MCF 10A (cell line): ENCODE measurements at regions of chr17 and their contacts with region 1.

Region 1: GRCh38 chr17:8057691-8058114 is 18.8 kb downstream of the ALOX15B start:
- DNase-seq: peak; percentile 86
- H3K4me3 Mint-ChIP-seq: no peak overlapping the region
- H3K27ac Mint-ChIP-seq: no peak overlapping the region
- H3K4me1 Mint-ChIP-seq: peaks cover 34% of the 10 kb centered on the region
- H3K27me3 Mint-ChIP-seq: peaks cover 12% of the 10 kb centered on the region
- CTCF ChIP-seq: peak; percentile 86

Region 2: DNA sequence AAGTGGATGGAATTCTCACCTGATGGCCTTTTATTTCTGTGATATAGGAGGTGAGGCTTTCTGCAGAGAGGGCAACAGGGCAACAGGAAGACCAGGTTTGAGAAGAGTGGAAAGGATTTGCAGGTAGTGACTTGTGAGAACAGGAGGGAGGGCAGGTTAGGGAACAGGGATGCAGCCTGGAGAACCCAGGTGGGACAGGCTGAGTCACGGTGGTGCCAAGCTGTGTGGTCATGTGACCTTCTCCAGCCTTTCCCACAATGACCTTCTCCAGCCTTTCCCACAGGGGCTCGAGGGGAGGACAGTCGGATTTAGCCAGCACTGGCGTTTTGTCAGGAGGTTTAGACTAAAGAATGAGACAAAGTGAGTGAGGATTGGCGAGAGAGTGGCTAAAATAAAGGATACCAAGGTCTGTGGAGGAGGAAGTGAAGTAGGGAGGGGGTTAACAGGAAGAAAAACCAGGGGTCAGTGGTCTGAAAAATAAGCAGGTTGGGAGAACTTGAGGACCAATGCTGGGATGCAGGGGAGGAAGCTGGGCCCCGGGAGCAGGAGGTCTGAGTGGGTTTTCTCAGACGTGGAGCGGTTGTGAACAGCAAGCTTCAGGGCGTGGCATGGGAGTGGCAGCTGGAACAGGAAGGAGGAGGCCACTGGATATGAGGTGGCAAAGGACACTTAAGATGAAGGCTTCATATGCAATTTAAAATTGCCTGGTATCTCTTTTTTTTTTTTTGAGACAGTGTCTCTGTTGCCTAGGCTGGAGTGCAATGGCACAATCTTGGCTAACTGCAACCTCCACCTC is 302.4 kb before region 1 on chr17:
- CTCF ChIA-PET with region 1: no interaction called
- POLR2A ChIA-PET with region 1: no interaction called
- intact Hi-C with region 1: no loop called
- DNase-seq: no peak
- H3K4me3 Mint-ChIP-seq: no peak overlapping the region
- H3K27ac Mint-ChIP-seq: no peak overlapping the region
- H3K4me1 Mint-ChIP-seq: peaks cover 14% of the 10 kb centered on the region
- H3K27me3 Mint-ChIP-seq: no peaks in the 10 kb centered on the region
- CTCF ChIP-seq: no peak

Region 3: DNA sequence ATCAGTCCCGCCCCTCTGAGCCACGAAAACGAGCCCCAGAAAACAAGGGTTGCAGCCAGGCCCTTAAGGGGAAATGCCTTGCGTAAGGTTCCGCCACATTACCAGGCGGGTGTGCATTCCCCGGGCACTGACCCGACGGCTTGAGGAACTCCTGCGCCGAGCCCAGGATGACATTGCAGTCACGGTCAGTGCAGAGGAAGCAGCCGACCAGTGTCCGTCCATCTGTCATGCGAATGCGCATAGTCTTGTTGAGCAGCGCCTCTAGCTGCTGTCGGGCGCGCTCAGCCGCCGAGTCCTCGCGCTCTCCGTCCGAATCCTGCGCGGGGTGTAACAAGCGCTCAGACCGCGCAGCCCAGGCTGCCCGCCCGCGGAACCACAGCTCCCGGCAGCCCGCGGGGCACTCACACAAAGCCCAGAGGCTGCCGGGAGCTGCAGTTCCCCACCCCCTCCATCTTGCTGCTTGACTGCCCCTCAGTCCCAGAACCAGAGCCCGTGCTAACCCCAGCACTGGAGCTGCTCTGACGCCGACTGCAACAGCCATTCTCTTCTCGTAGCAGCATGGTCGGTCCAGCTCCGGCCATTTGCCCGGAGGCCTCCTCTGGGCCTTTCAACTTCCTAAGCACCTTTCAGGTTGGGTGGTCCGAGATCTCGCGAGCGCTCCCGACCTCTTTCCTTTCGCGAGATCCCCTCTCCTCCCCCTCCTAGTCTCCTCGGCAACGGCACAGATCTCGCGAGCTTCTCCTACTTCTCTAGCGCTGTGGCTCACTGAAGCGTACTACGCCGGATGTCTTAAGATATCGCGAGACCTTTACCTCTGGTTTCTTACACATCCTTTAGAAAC is 200.6 kb before region 1 on chr17 and contains the start of gene NAA38:
- CTCF ChIA-PET with region 1: interaction called, 17 read pairs
- POLR2A ChIA-PET with region 1: interaction called, 6 read pairs
- intact Hi-C with region 1: loop called (anchors 5 kb)
- DNase-seq: peak; percentile 99
- H3K4me3 Mint-ChIP-seq: no peak within 1 kb of the TSS
- H3K27ac Mint-ChIP-seq: no peak within 1 kb of the TSS
- H3K4me1 Mint-ChIP-seq: peaks cover 7% of the 10 kb centered on the region
- H3K27me3 Mint-ChIP-seq: no peaks in the 10 kb centered on the region
- CTCF ChIP-seq: peak; percentile 22
- total RNA-seq, gene NAA38: 70.2 and 83.4 TPM in 2 replicates

Region 4: GRCh38 chr17:7989781-7990655 is 67.7 kb before region 1 on chr17:
- CTCF ChIA-PET with region 1: interaction called, 32 read pairs
- POLR2A ChIA-PET with region 1: interaction called, 5 read pairs
- intact Hi-C with region 1: loop called (anchors 2 kb)
- DNase-seq: peak; percentile 80
- H3K4me3 Mint-ChIP-seq: peak overlapping the region; percentile 63
- H3K27ac Mint-ChIP-seq: no peak overlapping the region
- H3K4me1 Mint-ChIP-seq: peaks cover 13% of the 10 kb centered on the region
- H3K27me3 Mint-ChIP-seq: no peaks in the 10 kb centered on the region
- CTCF ChIP-seq: peak; percentile 91

Region 5: DNA sequence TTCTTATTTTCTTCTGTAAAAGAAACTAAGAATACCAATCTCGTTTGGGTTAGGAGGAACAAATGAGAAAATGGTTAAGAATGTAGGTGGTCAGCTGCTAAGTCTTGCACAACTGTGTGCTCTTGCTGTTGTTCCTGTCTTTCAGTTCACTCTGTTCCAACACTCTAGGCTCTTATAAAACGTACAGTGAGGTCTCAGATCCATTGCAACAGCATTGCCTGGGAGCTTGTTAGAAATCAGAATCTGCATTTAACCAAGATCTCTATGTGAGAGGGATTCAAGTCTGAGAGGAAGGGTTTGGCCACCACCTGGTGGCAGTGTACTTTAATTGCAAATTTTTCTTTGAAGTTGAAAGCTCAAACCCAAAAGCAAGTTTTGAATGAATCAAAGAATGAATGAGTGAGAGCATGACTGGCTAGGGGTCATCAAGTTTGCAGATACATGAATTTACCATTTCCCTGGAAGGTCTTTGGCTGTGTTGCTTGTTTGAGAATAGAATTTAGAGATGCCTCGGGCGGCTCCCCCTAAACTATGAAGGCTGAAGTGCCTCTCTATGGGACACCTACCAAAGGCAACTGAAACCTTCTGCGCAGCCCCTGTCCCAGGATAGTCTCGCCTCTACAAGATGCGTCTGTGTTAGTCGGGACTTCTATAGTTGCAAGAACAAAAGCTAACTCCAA is 16.3 kb before region 1 on chr17:
- CTCF ChIA-PET with region 1: interaction called, 35 read pairs
- POLR2A ChIA-PET with region 1: interaction called, 25 read pairs
- intact Hi-C with region 1: no loop called
- DNase-seq: peak; percentile 91
- H3K4me3 Mint-ChIP-seq: peak overlapping the region; percentile 82
- H3K27ac Mint-ChIP-seq: peak overlapping the region; percentile 95
- H3K4me1 Mint-ChIP-seq: peaks cover 23% of the 10 kb centered on the region
- H3K27me3 Mint-ChIP-seq: no peaks in the 10 kb centered on the region
- CTCF ChIP-seq: peak; percentile 87

Region 6: DNA sequence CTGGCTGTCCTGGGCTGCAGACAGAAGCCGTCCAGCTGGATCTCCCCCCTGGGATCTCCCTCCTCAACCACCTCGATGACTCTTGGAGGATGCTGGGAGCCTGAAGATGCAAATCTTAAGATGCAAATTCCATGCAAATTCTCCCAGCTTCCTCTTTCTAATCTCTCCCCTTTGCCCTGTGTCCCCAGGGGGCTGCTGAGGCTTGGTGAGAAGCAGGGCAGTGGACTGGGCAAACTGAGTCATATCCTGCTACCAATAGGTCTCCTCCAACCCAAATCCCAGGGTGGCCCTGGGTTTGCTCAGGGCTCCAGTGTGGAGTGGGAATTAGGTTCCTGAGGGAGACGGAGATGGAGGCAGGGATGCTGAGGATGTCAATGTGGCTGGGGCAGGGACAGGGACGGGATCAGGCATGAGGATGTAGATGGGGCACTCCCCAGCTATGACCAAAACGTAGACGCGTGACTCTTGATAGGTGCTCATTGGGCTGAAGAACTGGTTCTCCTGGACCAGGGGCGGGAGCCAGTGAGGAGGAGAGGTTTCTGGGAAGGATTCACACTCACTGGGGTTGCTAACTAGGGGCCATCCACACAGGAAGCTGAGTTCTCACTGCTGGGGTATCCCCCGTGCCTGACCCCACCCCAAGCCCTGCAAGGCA is 33.5 kb after region 1 on chr17:
- CTCF ChIA-PET with region 1: interaction called, 16 read pairs
- POLR2A ChIA-PET with region 1: interaction called, 4 read pairs
- intact Hi-C with region 1: no loop called
- DNase-seq: no peak
- H3K4me3 Mint-ChIP-seq: no peak overlapping the region
- H3K27ac Mint-ChIP-seq: no peak overlapping the region
- H3K4me1 Mint-ChIP-seq: peaks cover 5% of the 10 kb centered on the region
- H3K27me3 Mint-ChIP-seq: peaks cover 13% of the 10 kb centered on the region
- CTCF ChIP-seq: no peak

Region 7: DNA sequence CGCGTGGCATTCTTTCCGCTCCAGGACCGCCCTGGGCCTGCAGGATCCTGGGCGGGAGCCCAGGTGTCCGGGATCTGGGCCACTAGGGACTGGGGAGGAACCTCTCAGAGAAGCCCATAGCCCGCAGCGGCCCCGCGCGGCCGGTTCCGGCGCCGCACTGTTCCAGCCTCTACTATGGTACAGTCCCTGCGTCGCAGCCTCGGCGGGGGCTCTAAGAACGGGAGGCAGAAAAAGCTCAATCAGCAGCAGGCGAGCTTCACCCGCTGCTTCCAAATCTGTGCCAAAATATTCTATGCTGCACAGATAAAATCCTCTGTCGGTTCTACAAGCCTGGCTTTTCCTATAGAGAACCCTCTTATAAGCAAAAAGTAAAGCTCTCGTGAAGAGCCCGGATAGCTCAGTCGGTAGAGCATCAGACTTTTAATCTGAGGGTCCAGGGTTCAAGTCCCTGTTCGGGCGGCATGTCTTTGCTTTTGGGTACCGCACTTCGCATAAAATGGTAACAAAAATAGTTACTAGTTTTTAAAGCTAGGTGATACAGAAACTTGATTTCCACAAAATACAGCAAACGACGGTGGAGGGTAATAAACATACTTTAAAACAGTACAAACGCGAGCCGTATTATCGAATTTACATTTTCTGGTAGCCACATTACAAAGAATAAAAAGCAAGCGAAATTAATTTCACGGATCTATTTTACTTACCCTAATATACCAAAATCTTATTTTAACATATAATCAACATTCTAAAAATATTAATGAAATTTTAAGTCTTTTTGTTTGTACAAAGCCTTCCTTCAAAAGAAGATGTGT is 61.3 kb after region 1 on chr17:
- CTCF ChIA-PET with region 1: interaction called, 35 read pairs
- POLR2A ChIA-PET with region 1: interaction called, 6 read pairs
- intact Hi-C with region 1: no loop called
- DNase-seq: peak; percentile 84
- H3K4me3 Mint-ChIP-seq: peak overlapping the region; percentile 77
- H3K27ac Mint-ChIP-seq: peak overlapping the region; percentile 98
- H3K4me1 Mint-ChIP-seq: peaks cover 32% of the 10 kb centered on the region
- H3K27me3 Mint-ChIP-seq: no peaks in the 10 kb centered on the region
- CTCF ChIP-seq: peak; percentile 87

Region 8: DNA sequence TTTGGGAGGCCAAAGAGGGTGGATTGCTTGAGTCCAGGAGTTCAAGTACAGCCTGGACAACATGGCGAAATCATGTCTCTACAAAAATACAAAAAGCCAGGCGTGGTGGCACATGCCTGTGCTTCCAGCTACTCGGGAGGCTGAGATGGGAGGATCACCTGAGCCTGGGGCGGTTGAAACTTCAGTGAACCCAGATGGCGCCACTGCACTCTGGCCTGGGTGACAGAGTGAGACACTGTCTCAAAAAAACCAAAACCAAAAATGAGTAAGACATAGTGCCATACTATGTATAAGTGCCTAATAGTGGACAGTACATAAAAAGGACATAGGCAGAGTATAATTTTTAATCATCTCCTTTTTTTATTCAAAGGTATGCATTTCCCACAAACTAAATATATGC is 186.1 kb after region 1 on chr17:
- CTCF ChIA-PET with region 1: no interaction called
- POLR2A ChIA-PET with region 1: no interaction called
- intact Hi-C with region 1: no loop called
- DNase-seq: no peak
- H3K4me3 Mint-ChIP-seq: no peak overlapping the region
- H3K27ac Mint-ChIP-seq: no peak overlapping the region
- H3K4me1 Mint-ChIP-seq: no peaks in the 10 kb centered on the region
- H3K27me3 Mint-ChIP-seq: no peaks in the 10 kb centered on the region
- CTCF ChIP-seq: no peak

Region 9: DNA sequence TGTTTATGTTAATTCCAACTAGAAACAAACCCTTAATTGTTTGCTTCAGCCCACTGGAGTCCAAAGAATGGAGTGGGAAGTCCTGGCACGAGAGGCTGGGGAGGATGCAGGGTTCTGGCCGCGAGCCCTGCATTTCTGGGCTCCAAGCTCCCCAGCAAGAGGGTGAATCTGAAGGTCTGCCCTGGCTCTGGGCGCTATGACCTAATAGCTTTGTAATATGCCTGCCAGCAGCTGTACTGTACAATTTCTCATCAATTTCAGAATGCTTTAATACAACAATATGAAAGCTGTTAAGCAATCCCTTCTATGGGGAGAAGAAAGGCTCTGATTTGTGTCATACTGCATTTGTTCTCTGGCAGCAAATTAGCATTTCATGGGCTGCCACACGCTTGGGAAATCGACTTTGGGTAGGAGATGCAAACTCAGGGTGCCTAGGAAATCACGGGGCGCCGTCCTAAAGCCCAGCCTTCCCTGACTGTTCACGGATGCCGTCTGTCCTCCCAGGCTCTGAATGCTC is 421.8 kb after region 1 on chr17:
- CTCF ChIA-PET with region 1: no interaction called
- POLR2A ChIA-PET with region 1: no interaction called
- intact Hi-C with region 1: no loop called
- DNase-seq: no peak
- H3K4me3 Mint-ChIP-seq: no peak overlapping the region
- H3K27ac Mint-ChIP-seq: peak overlapping the region; percentile 59
- H3K4me1 Mint-ChIP-seq: no peaks in the 10 kb centered on the region
- H3K27me3 Mint-ChIP-seq: no peaks in the 10 kb centered on the region
- CTCF ChIP-seq: no peak

Region 10: DNA sequence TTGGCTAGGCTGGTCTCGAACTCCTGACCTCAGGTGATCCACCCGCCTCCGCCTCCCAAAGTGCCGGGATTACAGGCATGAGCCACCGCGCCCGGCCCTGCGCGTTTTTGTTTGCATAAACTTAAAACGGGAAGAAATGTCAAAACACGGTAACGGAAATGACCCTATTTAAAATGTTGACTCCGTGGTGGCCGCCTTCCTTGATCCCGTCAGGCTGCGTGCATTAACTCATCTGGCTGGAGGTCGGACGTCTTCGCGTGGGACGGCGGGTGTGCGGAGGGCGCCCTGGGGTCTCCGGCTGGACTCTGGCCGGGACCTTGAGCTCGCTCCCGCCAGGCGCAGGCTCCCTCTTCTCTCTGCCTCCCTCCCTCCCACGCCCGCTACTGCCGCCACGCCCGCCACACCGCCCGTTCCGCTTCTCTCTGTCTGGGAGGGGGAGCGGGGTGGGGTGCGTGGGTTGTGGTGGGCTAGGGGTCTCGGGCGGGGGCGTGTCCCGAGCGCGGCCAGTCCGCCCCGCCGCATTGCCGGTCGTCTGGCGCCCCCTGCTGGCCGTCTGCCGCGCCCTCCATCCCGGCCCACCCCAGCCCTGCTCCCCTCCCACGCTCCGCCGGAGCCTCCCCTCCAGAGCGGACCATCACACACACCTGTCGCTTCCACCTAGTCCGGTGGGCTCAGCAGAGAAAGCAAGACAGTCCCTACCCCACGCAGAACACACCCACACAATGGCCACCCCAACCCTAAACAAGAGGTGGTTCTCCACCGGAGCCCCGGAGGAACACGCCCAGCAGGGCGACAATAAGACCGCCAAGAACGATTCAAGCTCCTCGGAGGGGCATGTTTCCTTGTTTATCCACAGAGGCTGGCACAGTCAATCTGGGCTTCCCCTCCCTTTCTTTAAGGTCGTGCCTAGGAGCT is 688.1 kb after region 1 on chr17:
- CTCF ChIA-PET with region 1: interaction called, 5 read pairs
- POLR2A ChIA-PET with region 1: no interaction called
- intact Hi-C with region 1: loop called (anchors 5 kb)
- DNase-seq: peak; percentile 48
- H3K4me3 Mint-ChIP-seq: peak overlapping the region; percentile 73
- H3K27ac Mint-ChIP-seq: no peak overlapping the region
- H3K4me1 Mint-ChIP-seq: no peaks in the 10 kb centered on the region
- H3K27me3 Mint-ChIP-seq: no peaks in the 10 kb centered on the region
- CTCF ChIP-seq: peak; percentile 98